Right ventricle myocardium inferior (tissue), 1 donor: ENCODE measurements at regions of chr1 and their contacts with region 1.

Region 1: DNA sequence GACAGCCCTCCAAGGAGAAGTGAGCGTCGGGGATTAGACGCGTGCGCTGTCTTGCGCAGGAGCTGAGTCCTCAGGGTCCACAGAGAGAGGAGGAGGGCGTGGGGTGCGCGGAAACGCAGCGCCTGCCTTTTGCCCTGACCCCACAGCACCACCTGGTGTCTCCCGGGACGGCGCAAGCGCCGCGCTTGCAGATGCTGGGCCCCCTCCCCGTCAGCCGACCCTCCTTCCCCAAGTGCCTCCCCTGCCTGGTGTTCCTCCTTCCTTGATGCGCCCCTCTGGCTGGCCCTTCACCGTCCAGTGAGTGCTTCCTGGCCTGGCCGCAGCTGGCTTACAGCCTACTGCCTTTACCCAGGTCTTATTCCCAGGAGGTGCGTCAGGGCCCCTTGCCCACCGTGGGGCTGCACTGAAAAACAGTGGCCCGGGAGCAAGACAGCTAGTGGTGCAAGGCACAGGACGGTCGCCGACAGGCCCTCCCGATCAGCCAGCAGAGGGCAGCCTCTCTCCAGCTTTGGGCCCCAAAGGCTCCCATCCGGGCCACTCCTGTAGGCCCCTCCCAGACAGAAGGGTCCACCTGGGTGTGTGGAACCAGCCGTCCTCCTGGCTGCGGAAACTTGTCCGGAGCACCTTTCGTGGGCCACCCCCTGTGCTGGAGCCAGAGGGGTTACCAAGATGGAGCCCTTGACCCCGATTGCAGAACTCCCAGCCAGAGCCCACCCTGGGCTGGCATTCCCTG is 12.9 kb upstream of the PHLDA3 start:
- DNase-seq: peak; percentile 91
- ATAC-seq: peak; percentile 89

Region 2: GRCh38 chr1:201433612-201434011 is 48.3 kb before region 1 on chr1:
- intact Hi-C with region 1: loop called (anchors 2 kb)
- DNase-seq: no peak
- ATAC-seq: no peak

Region 3: DNA sequence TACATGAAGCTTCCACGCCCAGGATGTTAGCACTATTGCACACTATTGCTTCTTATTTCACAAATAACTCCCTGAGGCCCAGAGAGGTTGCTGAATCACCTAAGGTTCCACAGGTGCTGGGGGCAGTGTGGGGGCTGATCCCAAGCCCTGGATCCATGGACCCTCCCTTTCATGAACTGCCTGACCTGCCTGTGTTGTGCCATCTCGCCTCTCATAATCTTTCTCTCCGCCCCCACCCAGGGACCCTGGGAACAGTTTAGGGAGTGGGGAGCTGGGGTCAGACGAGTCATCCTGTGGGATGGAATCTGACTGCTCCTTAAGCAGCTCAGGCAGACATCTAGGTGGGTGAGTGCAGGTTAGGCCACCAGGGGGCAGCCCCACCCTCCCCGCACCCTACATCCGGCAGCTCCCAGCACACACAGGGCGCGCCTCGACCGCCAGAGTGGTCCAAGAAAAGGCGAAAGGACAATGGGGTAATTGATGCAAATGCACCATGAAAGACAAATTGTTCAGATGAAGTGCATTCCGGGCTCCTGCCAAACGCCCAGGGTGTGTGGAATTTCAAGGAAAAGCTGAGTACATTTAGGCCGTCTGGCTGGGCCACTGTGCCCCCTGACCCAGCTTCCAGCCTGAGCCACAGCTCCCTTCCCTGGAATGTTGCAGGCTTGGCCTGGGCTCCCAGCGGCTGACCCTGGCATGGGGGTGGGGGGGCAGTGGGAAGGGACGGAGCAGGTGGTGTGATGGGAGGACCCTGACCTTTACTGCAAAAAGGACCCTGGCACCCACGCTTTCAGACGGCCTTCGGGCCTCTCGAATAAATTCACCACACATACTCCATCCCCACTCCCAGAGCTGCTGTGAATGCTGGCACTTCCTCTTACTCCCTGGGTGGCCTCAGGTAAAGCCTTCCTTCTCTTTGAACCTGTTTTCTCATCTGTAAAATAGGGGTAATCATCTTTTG is 33.7 kb before region 1 on chr1:
- intact Hi-C with region 1: loop called (anchors 1 kb)
- DNase-seq: peak; percentile 86
- ATAC-seq: peak; percentile 91

Region 4: DNA sequence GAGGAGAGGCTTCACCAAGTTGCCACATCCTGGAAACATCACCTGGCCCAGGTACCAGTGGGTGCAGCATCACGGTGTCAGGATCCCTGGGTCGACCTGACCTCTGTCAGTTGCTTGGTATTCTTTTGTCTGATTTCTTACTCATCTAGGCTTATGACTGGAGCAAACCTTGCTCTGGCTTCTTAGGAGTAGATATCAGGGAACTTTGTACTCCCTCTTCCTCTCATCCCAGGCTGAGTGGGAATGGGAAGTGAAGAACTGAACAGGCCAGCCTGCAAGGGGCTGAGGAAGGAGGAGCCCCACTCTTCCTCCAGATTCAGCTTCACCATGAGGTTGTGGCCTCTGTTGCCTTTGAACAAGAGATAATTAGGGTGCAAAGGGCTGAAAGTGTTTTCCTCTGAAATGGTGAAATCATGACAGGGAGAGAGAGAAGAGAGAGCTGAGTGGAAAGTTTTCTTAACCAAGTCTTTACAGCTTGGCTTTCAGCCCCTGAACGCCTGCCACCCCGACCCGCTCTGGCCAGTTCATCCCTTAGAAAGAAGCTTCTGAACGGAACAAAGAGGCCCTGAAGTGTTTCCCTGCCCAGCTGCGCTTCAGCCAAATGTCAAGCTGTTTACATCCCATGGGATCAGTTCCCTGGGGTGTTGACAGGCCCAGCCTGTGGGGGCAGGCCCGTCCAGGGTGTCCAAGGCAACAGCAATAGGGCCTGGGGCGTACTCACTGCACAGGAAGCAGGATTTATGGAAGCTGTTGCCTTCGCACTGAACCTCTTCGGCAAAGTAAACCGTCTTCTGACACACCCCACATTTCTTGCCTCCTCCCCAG is 13.8 kb after region 1 on chr1:
- intact Hi-C with region 1: loop called (anchors 1 kb)
- DNase-seq: peak; percentile 91
- ATAC-seq: peak; percentile 73

Region 5: DNA sequence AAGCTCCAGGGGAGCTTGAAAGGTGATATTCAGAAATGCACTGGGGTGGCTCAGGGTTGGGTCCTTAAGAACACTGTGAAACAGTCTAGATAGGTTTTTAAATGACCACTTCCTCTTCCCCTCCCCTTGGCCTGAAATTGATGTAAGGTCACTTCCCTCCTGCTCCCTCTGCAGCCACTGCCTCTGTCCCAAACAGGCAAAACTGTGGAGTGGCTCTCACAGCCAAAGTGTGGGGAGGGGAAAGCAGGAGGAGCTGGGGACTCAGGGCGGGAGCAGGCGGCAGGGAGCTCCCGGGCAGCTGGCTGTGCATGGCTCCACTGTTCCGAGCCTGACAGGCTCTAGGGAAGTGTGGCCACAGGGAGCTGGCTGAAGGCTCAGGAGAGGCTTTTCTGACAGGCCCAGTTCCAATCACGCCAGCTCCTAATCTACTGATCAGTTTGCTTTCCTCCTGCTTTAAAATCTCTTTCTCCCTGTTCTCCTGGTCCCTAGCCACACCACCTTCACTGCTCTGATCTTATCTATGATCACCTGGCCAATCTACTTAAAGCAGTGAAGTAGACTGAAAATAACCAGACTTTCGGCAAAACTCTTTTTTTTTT is 30.1 kb after region 1 on chr1:
- intact Hi-C with region 1: loop called (anchors 1 kb)
- DNase-seq: peak; percentile 86
- ATAC-seq: peak; percentile 86

Region 6: GRCh38 chr1:201593200-201593921 is 111.4 kb after region 1 on chr1:
- intact Hi-C with region 1: no loop called
- DNase-seq: no peak
- ATAC-seq: peak; percentile 89